Gastrocnemius medialis (tissue), 4 donors: ENCODE measurements at regions of chr20 and their contacts with region 1.

Region 1: GRCh38 chr20:50292324-50293243 is 102.0 kb downstream of the CEBPB start:
- DNase-seq: peak; percentile 89 to 92
- ATAC-seq: peak; percentile 76 to 84
- H3K4me3 ChIP-seq: no peak overlapping the region
- H3K27ac ChIP-seq: peak overlapping the region; percentile 83 to 95 (median 85)
- H3K4me1 ChIP-seq: peaks cover 19 to 21% of the 10 kb centered on the region in 2 donors
- H3K27me3 ChIP-seq: no peaks in the 10 kb centered on the region
- CTCF ChIP-seq: no peak
- POLR2A ChIP-seq: peak; percentile 32

Region 2: DNA sequence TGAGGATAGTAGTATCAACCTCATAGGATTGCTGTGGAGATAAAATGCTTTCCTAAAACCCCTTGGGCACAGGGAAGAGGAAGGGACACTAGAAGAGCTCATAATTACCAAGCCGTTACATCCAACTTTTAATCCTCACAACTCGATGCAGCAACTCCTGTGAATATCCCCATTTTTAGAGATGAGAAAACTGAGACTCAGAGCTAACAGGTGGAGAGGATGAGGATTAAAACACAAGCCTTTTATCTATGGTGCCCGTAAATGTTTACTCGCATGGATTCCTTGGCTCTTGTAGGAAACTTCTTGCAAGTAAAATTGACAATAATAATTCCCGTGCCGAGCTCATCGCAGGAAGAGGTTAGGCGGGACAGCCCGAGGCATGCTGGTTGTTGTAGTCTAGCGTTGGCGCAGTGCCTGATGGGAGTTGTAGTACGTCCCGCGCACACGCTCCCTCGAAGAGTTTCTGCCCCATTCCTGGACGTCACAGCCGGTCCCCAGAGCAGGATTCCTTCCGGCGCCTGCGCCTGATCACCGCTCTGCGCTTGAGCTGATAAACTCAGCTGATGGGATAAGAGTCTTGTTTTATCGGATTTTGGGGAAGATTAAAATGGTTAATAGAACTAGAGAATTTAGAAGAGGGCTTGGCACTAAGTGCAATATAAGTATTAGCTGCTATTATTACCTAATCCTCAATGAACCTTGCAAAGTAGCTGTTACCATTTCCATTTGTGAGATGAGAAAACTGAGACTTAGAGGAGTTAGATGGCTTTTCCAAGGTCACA is 176.8 kb before region 1 on chr20:
- in situ Hi-C with region 1: no loop called
- intact Hi-C with region 1: loop called (anchors 10 kb)
- DNase-seq: peak; percentile 97
- ATAC-seq: peak; percentile 85 to 87
- H3K4me3 ChIP-seq: peak overlapping the region; percentile 55 to 63 (median 59)
- H3K27ac ChIP-seq: peak overlapping the region; percentile 80 to 98 (median 88)
- H3K4me1 ChIP-seq: peaks cover 37 to 40% of the 10 kb centered on the region in 2 donors
- H3K27me3 ChIP-seq: no peaks in the 10 kb centered on the region
- CTCF ChIP-seq: no peak
- POLR2A ChIP-seq: peak; percentile 45 to 51